Calu3 (cell line): ENCODE measurements at regions of chr1 and their contacts with region 1.

Region 1: GRCh38 chr1:154730259-154730658 is 122.3 kb upstream of the ADAR start:
- DNase-seq: peak; percentile 69
- H3K4me3 Mint-ChIP-seq: no peak overlapping the region
- H3K27ac Mint-ChIP-seq: peak overlapping the region; percentile 67
- H3K4me1 Mint-ChIP-seq: peaks cover 24% of the 10 kb centered on the region
- H3K27me3 Mint-ChIP-seq: peaks cover 13% of the 10 kb centered on the region
- CTCF ChIP-seq: no peak

Region 2: DNA sequence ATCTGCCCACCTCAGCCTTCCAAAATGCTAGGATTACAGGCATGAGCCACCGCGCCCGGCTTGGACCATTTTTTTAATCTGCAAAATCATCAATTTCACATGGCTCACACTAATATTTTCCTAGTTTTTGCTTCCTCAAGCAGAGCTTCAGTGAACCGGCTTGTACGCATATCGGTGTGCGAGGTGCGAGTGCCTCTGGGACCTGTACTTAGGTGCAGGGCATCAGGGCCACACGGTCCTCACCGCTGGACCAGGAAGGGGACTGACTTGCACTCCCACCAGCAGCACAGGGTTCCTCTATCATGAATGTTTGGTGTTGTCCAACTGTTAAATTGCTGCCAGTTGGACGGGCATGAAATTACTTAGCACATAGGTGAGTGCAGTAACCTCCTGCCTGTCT is 212.6 kb before region 1 on chr1:
- CTCF ChIA-PET with region 1: no interaction called
- intact Hi-C with region 1: no loop called
- DNase-seq: no peak
- H3K4me3 Mint-ChIP-seq: no peak overlapping the region
- H3K27ac Mint-ChIP-seq: no peak overlapping the region
- H3K4me1 Mint-ChIP-seq: no peaks in the 10 kb centered on the region
- H3K27me3 Mint-ChIP-seq: peaks cover 83% of the 10 kb centered on the region
- CTCF ChIP-seq: no peak

Region 3: GRCh38 chr1:154714638-154715037 is 15.6 kb before region 1 on chr1:
- CTCF ChIA-PET with region 1: no interaction called
- intact Hi-C with region 1: loop called (anchors 2 kb)
- DNase-seq: peak; percentile 72
- H3K4me3 Mint-ChIP-seq: no peak overlapping the region
- H3K27ac Mint-ChIP-seq: no peak overlapping the region
- H3K4me1 Mint-ChIP-seq: peaks cover 12% of the 10 kb centered on the region
- H3K27me3 Mint-ChIP-seq: peaks cover 18% of the 10 kb centered on the region
- CTCF ChIP-seq: no peak